A549 (cell line): ENCODE measurements at regions of chr6 and their contacts with region 1.

Region 1: GRCh38 chr6:53544470-53545308 is at the start of gene GCLC:
- DNase-seq: peak; percentile 78 to 94
- ATAC-seq: peak; percentile 64 to 72
- H3K4me3 ChIP-seq: peak within 1 kb of the TSS; percentile 90
- H3K27ac ChIP-seq: peak within 1 kb of the TSS; percentile 95 to 98
- H3K4me1 ChIP-seq: peaks cover 40% of the 10 kb centered on the region
- CTCF ChIP-seq: peak; percentile 78
- EP300 ChIP-seq: peak in 1 of 2 experiments; percentile 28; a peak in 1 of 5 replicates
- POLR2A ChIP-seq: peak; percentile 95
- RAD21 ChIP-seq: peak; percentile 31 to 79; a peak in 4 of 5 replicates
- polyA plus RNA-seq, gene GCLC: 180 and 187 TPM in 2 replicates

Region 2: GRCh38 chr6:53517056-53517455 is 27.6 kb before region 1 on chr6:
- CTCF ChIA-PET with region 1: interaction called, 7 read pairs
- POLR2A ChIA-PET with region 1: interaction called, 13 read pairs
- DNase-seq: peak in 1 of 2 experiments; percentile 48
- ATAC-seq: peak in 1 of 2 experiments; percentile 70; a peak in 4 of 6 replicates
- H3K4me3 ChIP-seq: no peak overlapping the region
- H3K27ac ChIP-seq: peak overlapping the region; percentile 7 to 70; a peak in 4 of 6 replicates
- H3K4me1 ChIP-seq: peaks cover 73% of the 10 kb centered on the region
- CTCF ChIP-seq: no peak
- EP300 ChIP-seq: no peak
- POLR2A ChIP-seq: no peak
- RAD21 ChIP-seq: no peak

Region 3: GRCh38 chr6:53530346-53530745 is 14.3 kb before region 1 on chr6:
- CTCF ChIA-PET with region 1: interaction called, 11 read pairs
- POLR2A ChIA-PET with region 1: interaction called, 5 read pairs
- DNase-seq: no peak
- ATAC-seq: peak in 1 of 2 experiments; percentile 31; a peak in 2 of 6 replicates
- H3K4me3 ChIP-seq: no peak overlapping the region
- H3K27ac ChIP-seq: peak overlapping the region in 1 of 2 experiments; percentile 75; a peak in 3 of 6 replicates
- H3K4me1 ChIP-seq: peaks cover 97% of the 10 kb centered on the region
- CTCF ChIP-seq: no peak
- EP300 ChIP-seq: no peak
- POLR2A ChIP-seq: no peak
- RAD21 ChIP-seq: no peak

Region 4: DNA sequence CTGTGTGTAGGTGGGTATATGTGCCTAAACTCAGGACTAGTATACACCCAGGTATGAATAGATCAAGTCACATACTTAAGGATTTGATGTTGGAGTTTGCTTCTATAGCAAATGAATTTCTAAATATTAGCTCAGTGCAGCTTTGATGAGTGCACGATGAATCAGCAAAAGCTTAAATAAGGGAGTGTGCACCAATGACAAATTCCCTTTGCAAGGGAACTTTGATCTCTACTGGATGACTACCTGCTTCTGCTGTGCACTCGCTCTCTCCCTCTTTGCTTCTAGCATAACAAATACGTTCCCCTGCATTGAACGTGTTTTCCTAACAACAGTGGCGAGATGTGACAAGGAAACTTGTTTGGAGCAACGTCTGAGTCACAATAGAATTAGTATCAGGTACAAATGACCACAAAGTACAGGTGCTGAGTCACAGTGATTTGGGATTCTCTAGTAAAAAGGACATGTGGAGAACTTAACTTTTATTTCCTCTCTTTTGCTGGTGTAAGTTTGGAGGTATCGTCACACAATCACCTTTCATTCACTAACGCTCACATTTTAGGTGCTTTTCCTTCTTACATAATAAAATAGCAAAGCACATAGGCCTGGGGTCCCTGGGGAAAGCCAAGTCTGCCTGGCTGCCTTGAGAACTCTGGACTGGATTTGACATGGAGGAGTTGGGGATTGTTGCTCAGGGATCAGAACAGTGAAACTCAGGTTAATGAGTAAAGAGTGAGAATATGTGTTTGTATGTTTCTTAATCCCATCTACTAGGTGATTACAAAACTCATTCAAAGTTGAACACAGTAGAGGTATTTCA is 71.2 kb after region 1 on chr6:
- CTCF ChIA-PET with region 1: interaction called, 3 read pairs
- POLR2A ChIA-PET with region 1: interaction called, 16 read pairs
- DNase-seq: peak; percentile 80 to 98
- ATAC-seq: peak; percentile 94
- H3K4me3 ChIP-seq: peak overlapping the region; percentile 32
- H3K27ac ChIP-seq: peak overlapping the region; percentile 94 to 95
- H3K4me1 ChIP-seq: peaks cover 68% of the 10 kb centered on the region
- CTCF ChIP-seq: no peak
- EP300 ChIP-seq: peak; percentile 63 to 89; a peak in 3 of 5 replicates
- POLR2A ChIP-seq: no peak
- RAD21 ChIP-seq: peak in 1 of 2 experiments; percentile 21; a peak in 2 of 5 replicates

Region 5: GRCh38 chr6:53837865-53838769 is 293.4 kb after region 1 on chr6:
- CTCF ChIA-PET with region 1: no interaction called
- POLR2A ChIA-PET with region 1: no interaction called
- DNase-seq: no peak
- ATAC-seq: no peak
- H3K4me3 ChIP-seq: no peak overlapping the region
- H3K27ac ChIP-seq: no peak overlapping the region
- H3K4me1 ChIP-seq: no peaks in the 10 kb centered on the region
- CTCF ChIP-seq: no peak
- EP300 ChIP-seq: no peak
- POLR2A ChIP-seq: no peak
- RAD21 ChIP-seq: no peak